Calu3 (cell line): ENCODE measurements at regions of chr14 and their contacts with region 1.

Region 1: DNA sequence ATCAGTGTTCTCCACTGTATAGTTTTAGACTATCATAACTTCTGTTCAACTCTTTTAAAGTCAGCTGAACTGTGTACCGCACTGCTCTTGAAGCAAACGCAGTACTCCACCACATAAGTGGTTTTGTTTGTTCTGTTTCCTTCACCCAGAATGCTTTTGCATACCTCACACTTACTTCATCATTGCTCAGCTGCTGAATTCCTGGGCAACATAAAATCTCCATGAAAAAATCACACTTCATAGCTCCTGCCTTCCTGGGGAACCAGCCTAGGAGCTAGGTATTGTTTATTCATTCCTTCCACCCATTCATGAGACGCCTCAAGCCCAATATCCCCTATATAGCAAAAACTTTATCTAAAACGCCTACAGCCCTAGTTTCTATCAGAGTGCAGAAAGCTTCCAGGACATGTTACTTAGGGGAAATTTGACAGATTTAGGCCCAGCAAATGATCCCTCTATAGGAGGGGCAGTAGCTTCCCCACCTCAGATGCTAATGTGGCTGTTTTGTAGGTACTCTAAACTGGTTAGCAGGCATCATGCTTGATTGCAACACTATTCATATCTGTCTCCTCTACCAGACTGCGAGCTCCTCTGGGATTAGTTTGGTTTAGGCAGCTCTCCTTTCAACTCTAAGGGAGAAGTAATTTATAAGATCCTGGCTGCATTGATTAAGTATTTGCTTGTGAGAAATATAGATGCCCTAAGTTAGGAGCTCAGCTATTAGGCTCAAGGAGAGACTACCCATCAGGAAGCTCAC is 44.5 kb downstream of the LRRC9 start:
- DNase-seq: no peak
- H3K4me3 Mint-ChIP-seq: peak overlapping the region; percentile 75
- H3K27ac Mint-ChIP-seq: no peak overlapping the region
- H3K4me1 Mint-ChIP-seq: peaks cover 22% of the 10 kb centered on the region
- H3K27me3 Mint-ChIP-seq: peaks cover 13% of the 10 kb centered on the region
- CTCF ChIP-seq: no peak

Region 2: DNA sequence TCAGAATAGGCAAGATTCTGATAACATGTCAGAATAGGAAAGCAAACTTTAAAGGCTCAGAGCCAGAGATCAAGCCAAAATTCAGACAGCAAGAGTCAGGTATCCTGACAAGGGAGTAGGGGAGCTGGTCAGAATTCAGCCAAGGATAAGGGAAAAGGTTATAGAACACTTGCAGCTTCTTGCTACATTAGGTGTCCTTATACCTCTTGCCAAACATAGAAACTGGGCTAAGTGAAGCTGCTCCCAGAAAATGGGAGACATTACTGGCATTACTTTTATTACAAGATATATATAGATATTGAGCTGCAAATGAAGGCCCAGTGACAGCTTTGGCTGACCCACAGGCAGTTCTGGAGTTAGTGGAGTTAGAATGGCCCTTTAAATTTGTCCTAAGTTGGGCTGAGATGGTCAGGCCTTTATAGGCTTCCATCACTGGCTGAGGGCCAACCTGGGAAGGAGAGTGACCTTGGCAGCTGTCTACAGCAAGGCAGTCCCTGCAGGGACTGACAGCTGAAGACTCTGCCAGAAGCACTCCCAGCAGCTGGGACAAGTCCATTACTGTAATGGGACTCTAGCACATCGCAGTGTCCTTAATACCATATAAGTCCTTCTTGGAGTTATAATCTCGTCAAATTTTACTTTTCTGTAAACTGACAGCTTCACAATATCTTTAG is 38.5 kb after region 1 on chr14:
- CTCF ChIA-PET with region 1: no interaction called
- intact Hi-C with region 1: no loop called
- DNase-seq: no peak
- H3K4me3 Mint-ChIP-seq: no peak overlapping the region
- H3K27ac Mint-ChIP-seq: no peak overlapping the region
- H3K4me1 Mint-ChIP-seq: no peaks in the 10 kb centered on the region
- H3K27me3 Mint-ChIP-seq: no peaks in the 10 kb centered on the region
- CTCF ChIP-seq: no peak

Region 3: DNA sequence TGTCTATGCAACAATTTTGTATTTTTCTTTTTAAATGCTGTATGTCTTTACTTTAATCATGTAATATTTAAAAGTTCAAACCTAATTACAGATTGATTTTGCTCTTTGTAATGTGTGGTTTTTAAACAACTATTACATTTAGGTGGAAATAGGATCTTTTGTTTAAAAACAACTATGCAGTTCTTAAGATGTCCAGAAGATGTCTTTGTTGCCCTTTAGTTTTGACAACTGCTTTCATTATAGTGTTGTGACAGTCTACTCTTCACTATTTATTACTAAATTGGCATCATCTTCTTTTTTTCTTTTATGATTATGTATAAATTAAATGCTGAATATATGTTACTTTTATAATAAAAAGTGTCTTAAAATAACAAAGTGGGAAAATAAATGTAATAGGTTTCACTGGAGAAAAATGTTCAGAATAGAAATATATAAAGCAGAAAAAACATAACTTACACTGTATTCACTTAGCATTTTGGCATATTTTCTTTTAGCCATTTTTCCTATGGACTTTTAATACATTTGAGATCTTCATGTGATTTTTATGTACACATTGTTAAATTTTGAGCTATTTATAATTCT is 100.2 kb after region 1 on chr14:
- CTCF ChIA-PET with region 1: no interaction called
- intact Hi-C with region 1: loop called (anchors 10 kb)
- DNase-seq: no peak
- H3K4me3 Mint-ChIP-seq: no peak overlapping the region
- H3K27ac Mint-ChIP-seq: no peak overlapping the region
- H3K4me1 Mint-ChIP-seq: no peaks in the 10 kb centered on the region
- H3K27me3 Mint-ChIP-seq: no peaks in the 10 kb centered on the region
- CTCF ChIP-seq: no peak

Region 4: DNA sequence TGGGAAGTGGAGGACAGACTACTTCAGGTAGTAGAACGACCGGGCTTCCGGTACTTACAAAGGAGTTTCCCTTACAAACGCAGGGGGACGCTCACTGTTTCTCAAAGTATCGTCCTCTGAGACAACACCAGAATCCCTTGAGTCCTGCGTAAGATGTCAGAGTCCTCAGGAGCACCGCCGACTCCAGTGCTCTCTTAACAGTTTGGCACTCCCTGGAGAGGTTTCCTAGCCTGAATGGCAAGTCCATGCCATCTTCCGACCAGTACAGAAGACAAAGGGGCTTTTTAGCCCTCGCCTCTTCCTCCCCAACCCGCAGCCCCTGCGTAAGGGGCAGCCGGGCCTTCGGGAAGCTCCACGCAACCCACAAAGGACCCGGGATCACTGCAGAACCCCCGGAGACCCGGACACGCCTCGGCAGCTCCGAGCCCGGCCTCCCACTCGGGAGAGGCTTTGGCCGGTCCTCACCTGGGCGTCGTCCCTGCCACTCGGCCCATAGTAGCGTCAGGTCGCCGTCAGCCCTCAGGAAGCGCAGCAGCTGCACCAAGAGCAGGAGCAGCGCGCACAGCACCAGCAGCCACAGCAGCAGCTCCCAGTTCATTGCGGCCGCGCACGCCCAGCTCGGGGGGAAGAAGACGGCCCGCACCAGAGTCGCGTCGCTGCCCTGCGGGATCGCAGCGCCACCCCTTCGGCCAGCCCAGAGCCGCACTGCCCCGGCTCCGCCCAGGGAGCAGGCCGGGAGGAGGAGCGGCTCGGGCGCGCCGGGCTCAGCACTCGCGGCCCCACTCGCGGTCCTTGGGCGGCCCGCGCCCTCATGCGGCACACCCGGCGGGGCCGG is 200.5 kb after region 1 on chr14 and contains the start of gene DHRS7:
- CTCF ChIA-PET with region 1: no interaction called
- intact Hi-C with region 1: loop called (anchors 5 kb)
- DNase-seq: peak; percentile 82
- H3K4me3 Mint-ChIP-seq: peak within 1 kb of the TSS; percentile 92
- H3K27ac Mint-ChIP-seq: peak within 1 kb of the TSS; percentile 75
- H3K4me1 Mint-ChIP-seq: peaks cover 9% of the 10 kb centered on the region
- H3K27me3 Mint-ChIP-seq: no peaks in the 10 kb centered on the region
- CTCF ChIP-seq: no peak
- total RNA-seq, gene DHRS7: 34.9 and 39.3 TPM in 2 replicates

Region 5: DNA sequence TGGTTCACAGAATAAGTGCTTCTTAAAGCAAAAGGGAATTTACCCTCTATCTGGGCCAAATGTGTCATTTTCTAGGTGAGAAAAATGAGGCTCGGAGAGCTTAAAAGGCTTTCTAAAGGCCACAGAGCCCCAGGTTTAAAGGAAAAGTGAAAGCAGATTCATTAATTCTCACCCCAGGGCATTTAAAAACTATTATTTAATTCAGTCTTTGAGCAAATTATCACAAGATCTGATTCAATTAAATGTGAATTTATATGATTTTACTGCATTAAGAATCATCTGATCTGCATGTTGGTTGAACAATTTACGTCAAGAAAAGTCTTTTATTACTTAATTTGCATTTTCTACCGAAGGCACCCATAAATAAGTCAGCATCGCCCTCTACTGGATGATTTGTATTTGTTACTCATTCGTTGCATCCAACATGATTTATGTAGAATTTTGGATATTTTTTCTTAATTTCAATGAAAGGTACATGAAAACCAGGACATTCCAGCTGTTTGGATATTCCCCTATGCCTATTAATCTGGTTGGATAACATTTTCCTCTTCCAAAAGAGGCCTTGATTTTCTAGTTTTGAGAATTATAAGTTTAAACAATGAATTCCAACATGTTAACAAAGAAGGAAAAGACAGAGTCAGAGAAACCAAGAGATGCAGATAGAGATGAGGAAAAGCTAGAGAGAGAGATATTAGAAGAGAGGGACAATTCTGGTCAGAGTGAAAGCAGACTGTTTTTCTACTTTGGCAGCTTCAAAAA is 219.9 kb after region 1 on chr14:
- CTCF ChIA-PET with region 1: interaction called, 4 read pairs
- intact Hi-C with region 1: loop called (anchors 1 kb)
- DNase-seq: peak; percentile 36
- H3K4me3 Mint-ChIP-seq: no peak overlapping the region
- H3K27ac Mint-ChIP-seq: no peak overlapping the region
- H3K4me1 Mint-ChIP-seq: no peaks in the 10 kb centered on the region
- H3K27me3 Mint-ChIP-seq: no peaks in the 10 kb centered on the region
- CTCF ChIP-seq: peak; percentile 29

Region 6: DNA sequence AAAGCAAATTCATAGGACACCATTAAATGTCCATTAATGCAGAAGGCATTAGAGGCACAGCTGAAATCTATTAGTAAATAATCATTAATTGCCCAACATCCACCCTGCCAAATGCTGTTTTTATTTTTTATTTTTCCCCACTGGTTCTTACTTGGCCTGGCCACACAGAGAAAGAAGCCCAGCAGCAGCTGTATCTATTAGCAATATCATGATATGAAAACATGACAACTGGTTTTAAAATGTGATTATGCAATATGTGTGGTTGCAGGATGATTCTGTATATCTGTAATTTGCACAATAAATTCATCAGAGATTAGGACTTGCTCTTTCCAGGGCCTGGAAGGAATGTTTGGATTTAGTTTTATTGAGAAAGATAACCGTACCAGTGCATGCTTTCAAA is 589.4 kb after region 1 on chr14:
- CTCF ChIA-PET with region 1: no interaction called
- intact Hi-C with region 1: loop called (anchors 10 kb)
- DNase-seq: no peak
- H3K4me3 Mint-ChIP-seq: no peak overlapping the region
- H3K27ac Mint-ChIP-seq: no peak overlapping the region
- H3K4me1 Mint-ChIP-seq: no peaks in the 10 kb centered on the region
- H3K27me3 Mint-ChIP-seq: peaks cover 19% of the 10 kb centered on the region
- CTCF ChIP-seq: no peak